ENCODE measurements at regions of chr9 and their contacts with region 1.

Region 1: GRCh38 chr9:115524453-115525059 is 406.6 kb upstream of the TNC start:
- DNase-seq: peak; percentile 77
- ATAC-seq: peak; percentile 45
- H3K4me3 ChIP-seq: no peak overlapping the region
- H3K27ac ChIP-seq: no peak overlapping the region
- H3K4me1 ChIP-seq: no peaks in the 10 kb centered on the region
- H3K27me3 ChIP-seq: no peaks in the 10 kb centered on the region
- CTCF ChIP-seq: peak; percentile 76

Region 2: DNA sequence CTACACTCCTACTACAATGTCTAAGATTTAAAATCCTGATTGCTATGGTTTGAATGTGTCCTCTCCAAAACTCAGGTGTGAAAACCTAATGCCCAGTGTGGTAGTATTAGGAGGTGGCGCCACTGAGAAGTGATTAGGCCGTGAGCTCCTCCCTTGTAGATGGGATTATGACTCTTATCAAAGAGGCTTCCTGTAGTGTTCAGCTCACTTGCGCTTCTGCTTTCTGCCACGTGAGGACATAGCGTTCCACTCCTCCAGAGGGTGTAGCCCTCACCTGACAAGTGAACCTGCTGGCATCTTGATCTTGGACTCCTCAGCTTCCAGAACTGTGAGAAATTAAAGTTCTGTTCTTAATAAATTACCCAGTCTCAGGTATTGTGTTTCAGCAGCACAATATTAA is 986.3 kb before region 1 on chr9:
- CTCF ChIA-PET with region 1: interaction called, 10 read pairs
- POLR2A ChIA-PET with region 1: no interaction called
- intact Hi-C with region 1: no loop called
- DNase-seq: peak; percentile 15
- ATAC-seq: 0 out of 2 replicates have a peak, but pooled peaks have one; percentile 20
- H3K4me3 ChIP-seq: no peak overlapping the region
- H3K27ac ChIP-seq: no peak overlapping the region
- H3K4me1 ChIP-seq: peaks cover 5% of the 10 kb centered on the region
- H3K27me3 ChIP-seq: no peaks in the 10 kb centered on the region
- CTCF ChIP-seq: peak; percentile 37

Region 3: DNA sequence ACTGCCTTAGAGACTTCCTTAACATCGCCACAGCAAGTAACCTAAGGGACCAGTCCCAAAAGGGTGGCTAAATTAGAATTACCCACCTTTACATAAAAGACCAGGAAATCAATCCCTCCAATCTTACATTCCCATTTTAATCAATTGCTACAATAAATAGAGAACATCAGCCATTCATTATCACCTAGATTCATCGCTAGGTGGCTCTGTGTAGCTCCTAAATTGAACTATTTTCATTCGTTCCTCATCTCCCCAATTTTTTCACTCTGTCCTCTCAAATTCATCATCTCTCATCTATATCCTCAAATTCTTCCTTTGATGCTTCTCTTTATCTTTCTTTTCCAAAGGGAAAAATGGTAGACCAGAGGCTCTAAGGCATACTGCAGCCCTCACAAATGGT is 298.4 kb before region 1 on chr9:
- CTCF ChIA-PET with region 1: no interaction called
- POLR2A ChIA-PET with region 1: interaction called, 3 read pairs
- intact Hi-C with region 1: loop called (anchors 1 kb)
- DNase-seq: peak; percentile 47
- ATAC-seq: no peak
- H3K4me3 ChIP-seq: no peak overlapping the region
- H3K27ac ChIP-seq: no peak overlapping the region
- H3K4me1 ChIP-seq: no peaks in the 10 kb centered on the region
- H3K27me3 ChIP-seq: no peaks in the 10 kb centered on the region
- CTCF ChIP-seq: peak; percentile 66